ENCODE measurements at regions of chr9 and their contacts with region 1.

Region 1: DNA sequence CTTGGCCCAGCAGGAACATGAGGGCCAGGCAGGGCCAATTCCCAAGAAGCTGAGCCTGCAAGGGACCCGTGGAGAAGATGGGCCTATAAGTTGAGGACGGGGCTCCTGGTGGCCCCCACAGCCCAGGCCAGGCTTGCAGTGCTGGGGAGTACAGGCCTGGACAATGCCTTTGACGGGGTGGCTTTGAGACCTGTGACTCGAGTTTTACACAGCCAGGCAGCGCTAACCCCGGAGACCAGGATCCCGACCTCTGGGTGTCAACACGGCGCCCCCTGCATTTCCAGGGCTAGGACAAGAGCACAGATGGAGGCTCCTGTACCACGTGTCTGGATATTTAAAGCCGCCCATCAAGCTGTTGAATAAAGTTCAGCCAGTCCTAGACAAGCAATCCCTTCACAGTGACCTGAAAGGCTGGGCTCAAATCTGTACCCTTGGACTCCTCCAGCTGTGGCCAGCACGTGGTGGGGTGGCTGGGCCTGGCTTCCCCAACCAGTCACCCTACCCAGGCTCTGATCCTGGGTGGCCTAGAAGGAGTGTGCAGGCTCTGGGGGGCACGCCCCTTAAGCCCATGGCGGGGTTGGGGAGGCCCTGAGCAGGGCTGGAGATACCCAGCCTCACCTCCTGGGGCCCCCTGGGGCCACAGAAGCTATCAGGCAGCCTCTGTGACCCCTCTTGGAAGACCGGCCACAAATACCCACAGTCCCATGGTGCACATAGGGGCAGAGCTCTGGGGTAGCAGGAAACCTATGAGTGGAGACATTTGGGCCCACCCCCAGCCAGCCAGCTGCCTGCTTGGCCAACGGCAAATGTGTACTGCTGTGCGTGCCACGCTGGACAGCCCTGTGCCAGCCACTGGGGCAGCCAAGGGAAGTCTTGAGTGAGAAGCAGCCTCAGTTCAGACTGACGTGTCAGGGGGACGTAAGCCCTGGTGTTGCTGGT is 88.7 kb downstream of the NTNG2 start:
- DNase-seq: no peak
- ATAC-seq: no peak; the same call in 2 of the 3 replicates
- H3K4me3 ChIP-seq: no peak overlapping the region
- H3K27ac ChIP-seq: no peak overlapping the region
- H3K4me1 ChIP-seq: peaks cover 0 to 7% of the 10 kb centered on the region in 2 experiments; a peak in 2 of 5 replicates
- H3K27me3 ChIP-seq: peaks cover 7 to 38% of the 10 kb centered on the region in 2 experiments; a peak in 4 of 5 replicates
- CTCF ChIP-seq: no peak
- EP300 ChIP-seq: no peak
- POLR2A ChIP-seq: no peak
- RAD21 ChIP-seq: no peak

Region 2: DNA sequence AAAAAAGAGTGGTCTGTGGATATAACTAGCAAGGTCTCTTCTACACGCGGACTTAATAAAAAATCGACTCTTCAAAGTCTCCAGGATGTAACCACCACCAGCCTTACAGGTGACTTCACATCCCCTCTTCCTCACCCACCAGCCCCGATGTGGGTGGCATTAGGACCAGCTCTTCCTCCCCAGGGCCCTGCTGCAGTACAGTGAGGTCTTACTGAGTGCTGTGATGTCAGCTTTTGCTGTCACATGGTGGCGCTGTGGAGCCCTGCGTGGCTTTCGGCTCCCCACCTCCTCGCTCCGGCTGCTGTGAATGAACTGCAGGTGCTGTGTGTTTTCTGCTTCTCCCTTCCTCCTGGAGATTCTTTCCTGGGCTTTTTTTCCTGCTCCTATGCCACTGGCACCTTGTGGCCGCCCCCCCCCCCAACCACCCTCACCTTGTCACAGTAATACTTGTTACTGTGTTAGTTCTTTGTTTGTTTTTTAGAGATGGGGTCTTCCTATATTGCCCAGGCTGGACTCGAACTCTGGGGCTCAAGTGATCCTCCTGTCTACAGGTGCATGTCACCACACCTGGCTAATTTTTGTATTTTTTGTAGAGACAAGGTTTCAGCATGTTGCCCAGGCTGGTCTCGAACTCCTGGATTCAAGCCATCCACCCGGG is 494.9 kb before region 1 on chr9:
- CTCF ChIA-PET with region 1: no interaction called
- POLR2A ChIA-PET with region 1: no interaction called
- in situ Hi-C with region 1: loop called (anchors 5 kb)
- intact Hi-C with region 1: loop called (anchors 5 kb)
- DNase-seq: peak; percentile 61 to 85 (median 66)
- ATAC-seq: peak; percentile 100
- H3K4me3 ChIP-seq: no peak overlapping the region
- H3K27ac ChIP-seq: no peak overlapping the region
- H3K4me1 ChIP-seq: no peaks in the 10 kb centered on the region
- H3K27me3 ChIP-seq: peaks cover 17 to 26% of the 10 kb centered on the region in 2 experiments
- CTCF ChIP-seq: peak; percentile 89 to 91 (median 91)
- EP300 ChIP-seq: no peak
- POLR2A ChIP-seq: no peak
- RAD21 ChIP-seq: peak; percentile 36 to 77